A673 (cell line): ENCODE measurements at regions of chr4 and their contacts with region 1.

Region 1: GRCh38 chr4:39977489-39978377 is at the start of gene PDS5A:
- DNase-seq: peak; percentile 96
- H3K4me3 ChIP-seq: peak within 1 kb of the TSS; percentile 100
- H3K27ac ChIP-seq: peak within 1 kb of the TSS; percentile 94
- H3K4me1 ChIP-seq: peaks cover 9% of the 10 kb centered on the region
- H3K27me3 ChIP-seq: no peaks in the 10 kb centered on the region
- CTCF ChIP-seq: peak; percentile 69
- total RNA-seq, gene PDS5A: 104 and 106 TPM in 2 replicates

Region 2: DNA sequence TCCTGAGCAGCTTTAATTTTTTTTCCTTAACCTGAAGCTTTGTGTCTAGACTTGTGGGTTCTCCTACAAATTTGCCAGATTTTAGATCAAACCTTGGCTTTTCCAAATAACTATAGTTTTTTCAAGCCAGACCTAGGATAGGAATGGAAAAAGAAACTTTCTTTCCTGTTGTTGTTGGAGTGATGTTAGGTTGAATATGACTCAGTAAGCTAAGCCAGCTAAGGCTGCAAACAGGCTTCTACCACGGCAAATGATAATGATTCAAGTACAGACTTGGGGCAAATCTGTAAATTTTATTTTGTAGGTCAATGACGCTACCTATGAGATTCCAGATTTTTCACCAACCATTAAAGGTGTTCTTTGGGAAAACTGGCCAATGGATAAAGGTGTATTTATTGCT is 749.8 kb before region 1 on chr4:
- CTCF ChIA-PET with region 1: no interaction called
- POLR2A ChIA-PET with region 1: no interaction called
- intact Hi-C with region 1: no loop called
- DNase-seq: no peak
- H3K4me3 ChIP-seq: no peak overlapping the region
- H3K27ac ChIP-seq: no peak overlapping the region
- H3K4me1 ChIP-seq: no peaks in the 10 kb centered on the region
- H3K27me3 ChIP-seq: no peaks in the 10 kb centered on the region
- CTCF ChIP-seq: no peak

Region 3: GRCh38 chr4:39469429-39470077 is 508.2 kb before region 1 on chr4:
- CTCF ChIA-PET with region 1: no interaction called
- POLR2A ChIA-PET with region 1: no interaction called
- intact Hi-C with region 1: loop called (anchors 1 kb)
- DNase-seq: peak; percentile 92
- H3K4me3 ChIP-seq: no peak overlapping the region
- H3K27ac ChIP-seq: peak overlapping the region; percentile 28
- H3K4me1 ChIP-seq: peaks cover 8% of the 10 kb centered on the region
- H3K27me3 ChIP-seq: no peaks in the 10 kb centered on the region
- CTCF ChIP-seq: peak; percentile 93

Region 4: DNA sequence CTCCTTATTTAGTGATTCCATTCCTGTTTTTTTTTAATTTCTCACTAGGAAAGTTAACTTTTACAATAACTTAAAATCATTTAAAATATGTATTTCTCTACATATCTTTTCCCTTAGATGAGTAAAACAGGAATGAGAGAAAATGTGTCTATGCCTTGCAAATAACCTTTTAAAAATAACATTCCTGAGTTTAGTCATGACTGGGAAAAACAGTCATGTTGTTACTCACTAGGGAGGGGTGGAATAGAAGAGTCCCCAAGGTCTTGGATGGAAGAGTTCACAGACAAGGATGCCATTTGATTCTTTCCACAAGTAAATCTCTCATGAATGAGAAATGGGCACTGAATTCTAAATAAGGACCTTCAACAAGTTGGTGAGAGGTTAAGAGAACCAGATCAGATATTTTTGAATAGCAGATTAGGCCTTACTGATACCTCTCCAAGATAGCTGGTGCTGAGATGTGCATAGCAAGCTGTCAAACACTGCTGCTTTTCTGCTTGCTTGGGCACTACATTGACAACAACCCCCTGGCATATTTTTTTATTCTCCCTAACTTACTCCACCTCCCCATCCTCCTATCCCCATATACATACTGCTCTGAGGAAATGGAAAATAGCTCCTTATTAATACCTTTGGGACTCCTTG is 475.6 kb before region 1 on chr4:
- CTCF ChIA-PET with region 1: no interaction called
- POLR2A ChIA-PET with region 1: no interaction called
- intact Hi-C with region 1: no loop called
- DNase-seq: no peak
- H3K4me3 ChIP-seq: no peak overlapping the region
- H3K27ac ChIP-seq: no peak overlapping the region
- H3K4me1 ChIP-seq: no peaks in the 10 kb centered on the region
- H3K27me3 ChIP-seq: no peaks in the 10 kb centered on the region
- CTCF ChIP-seq: no peak

Region 5: GRCh38 chr4:39527273-39528060 is 450.3 kb before region 1 on chr4 and contains the start of gene UGDH:
- CTCF ChIA-PET with region 1: no interaction called
- POLR2A ChIA-PET with region 1: no interaction called
- intact Hi-C with region 1: loop called (anchors 5 kb)
- DNase-seq: peak; percentile 99
- H3K4me3 ChIP-seq: peak within 1 kb of the TSS; percentile 84
- H3K27ac ChIP-seq: peak within 1 kb of the TSS; percentile 78
- H3K4me1 ChIP-seq: peaks cover 4% of the 10 kb centered on the region
- H3K27me3 ChIP-seq: no peaks in the 10 kb centered on the region
- CTCF ChIP-seq: no peak
- total RNA-seq, gene UGDH: 52.5 and 62.1 TPM in 2 replicates

Region 6: GRCh38 chr4:39638354-39639240 is 339.1 kb before region 1 on chr4 and contains the start of gene SMIM14:
- CTCF ChIA-PET with region 1: no interaction called
- POLR2A ChIA-PET with region 1: no interaction called
- intact Hi-C with region 1: loop called (anchors 10 kb)
- DNase-seq: peak; percentile 99
- H3K4me3 ChIP-seq: peak within 1 kb of the TSS; percentile 95
- H3K27ac ChIP-seq: peak within 1 kb of the TSS; percentile 91
- H3K4me1 ChIP-seq: peaks cover 10% of the 10 kb centered on the region
- H3K27me3 ChIP-seq: no peaks in the 10 kb centered on the region
- CTCF ChIP-seq: no peak
- total RNA-seq, gene SMIM14: 14.4 and 14.5 TPM in 2 replicates

Region 7: DNA sequence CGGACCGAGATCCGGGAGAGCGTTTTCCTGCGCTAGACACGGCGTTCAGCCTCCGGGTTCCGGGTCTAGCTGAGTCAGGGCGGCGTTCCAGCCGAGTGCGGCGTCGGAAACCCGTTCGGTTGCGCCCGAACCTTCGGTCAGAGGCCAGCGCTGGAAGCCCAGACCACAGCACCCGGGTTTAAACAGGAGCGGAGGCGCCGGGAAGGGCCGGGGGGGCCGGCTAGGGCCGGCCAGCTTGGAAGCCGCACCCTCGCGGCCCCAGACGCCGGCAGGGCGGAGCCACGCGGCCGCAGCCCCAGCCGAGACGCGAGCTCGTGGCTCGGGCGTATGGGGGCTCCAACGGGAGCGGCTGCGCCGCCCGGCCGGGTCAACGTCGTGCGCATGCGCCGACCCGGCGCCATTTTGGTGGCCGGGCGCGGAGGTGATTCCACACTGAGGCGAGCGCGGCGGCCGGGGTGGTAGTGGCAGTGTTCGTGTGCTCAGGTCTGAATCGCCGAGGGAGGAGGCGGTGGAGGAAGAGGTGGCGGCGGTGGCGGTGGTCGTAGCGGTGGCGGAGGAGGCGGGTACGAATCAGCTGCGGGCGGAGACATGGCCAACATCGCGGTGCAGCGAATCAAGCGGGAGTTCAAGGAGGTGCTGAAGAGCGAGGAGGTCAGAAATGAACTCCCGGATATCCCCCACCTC is 279.9 kb before region 1 on chr4 and contains the start of gene UBE2K:
- CTCF ChIA-PET with region 1: no interaction called
- POLR2A ChIA-PET with region 1: no interaction called
- intact Hi-C with region 1: loop called (anchors 2 kb)
- DNase-seq: peak; percentile 93
- H3K4me3 ChIP-seq: peak within 1 kb of the TSS; percentile 87
- H3K27ac ChIP-seq: peak within 1 kb of the TSS; percentile 95
- H3K4me1 ChIP-seq: peaks cover 6% of the 10 kb centered on the region
- H3K27me3 ChIP-seq: no peaks in the 10 kb centered on the region
- CTCF ChIP-seq: no peak
- total RNA-seq, gene UBE2K: 137 and 138 TPM in 2 replicates

Region 8: GRCh38 chr4:40409835-40410234 is 432.1 kb after region 1 on chr4:
- CTCF ChIA-PET with region 1: no interaction called
- POLR2A ChIA-PET with region 1: no interaction called
- intact Hi-C with region 1: no loop called
- DNase-seq: no peak
- H3K4me3 ChIP-seq: no peak overlapping the region
- H3K27ac ChIP-seq: no peak overlapping the region
- H3K4me1 ChIP-seq: no peaks in the 10 kb centered on the region
- H3K27me3 ChIP-seq: no peaks in the 10 kb centered on the region
- CTCF ChIP-seq: no peak